ENCODE measurements at regions of chr4 and their contacts with region 1.

Region 1: GRCh38 chr4:118974758-118975157 is 86.1 kb downstream of the SYNPO2 start:
- DNase-seq: no peak
- ATAC-seq: no peak
- H3K4me3 ChIP-seq: peak overlapping the region in 3 of 4 donors; percentile 23 to 43 (median 39)
- H3K27ac ChIP-seq: peak overlapping the region; percentile 87 to 99 (median 92)
- H3K4me1 ChIP-seq: peaks cover 40 to 46% of the 10 kb centered on the region in 2 donors
- H3K27me3 ChIP-seq: no peaks in the 10 kb centered on the region
- CTCF ChIP-seq: no peak
- POLR2A ChIP-seq: no peak

Region 2: DNA sequence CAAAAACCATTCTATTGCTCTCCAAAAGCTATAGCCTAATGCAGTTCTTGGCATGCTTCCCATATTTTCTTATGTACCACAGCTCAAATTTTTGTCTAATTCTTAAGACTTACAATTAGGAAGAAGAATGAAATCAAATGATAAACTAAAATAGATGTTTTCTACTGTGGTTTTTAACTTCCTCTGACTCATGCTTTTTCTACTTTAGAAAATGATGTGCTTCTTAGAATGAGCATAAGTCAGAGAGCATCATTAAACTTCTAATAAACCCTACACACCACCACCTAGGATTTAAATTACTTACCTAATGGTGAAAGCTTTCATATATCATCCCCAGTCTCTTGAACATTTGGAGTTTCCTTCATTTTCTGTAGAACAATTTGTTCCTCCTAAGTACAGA is 1157.5 kb before region 1 on chr4:
- in situ Hi-C with region 1: no loop called
- intact Hi-C with region 1: no loop called
- DNase-seq: no peak
- ATAC-seq: no peak
- H3K4me3 ChIP-seq: no peak overlapping the region
- H3K27ac ChIP-seq: no peak overlapping the region
- H3K4me1 ChIP-seq: no peaks in the 10 kb centered on the region
- H3K27me3 ChIP-seq: no peaks in the 10 kb centered on the region
- CTCF ChIP-seq: no peak
- POLR2A ChIP-seq: no peak

Region 3: DNA sequence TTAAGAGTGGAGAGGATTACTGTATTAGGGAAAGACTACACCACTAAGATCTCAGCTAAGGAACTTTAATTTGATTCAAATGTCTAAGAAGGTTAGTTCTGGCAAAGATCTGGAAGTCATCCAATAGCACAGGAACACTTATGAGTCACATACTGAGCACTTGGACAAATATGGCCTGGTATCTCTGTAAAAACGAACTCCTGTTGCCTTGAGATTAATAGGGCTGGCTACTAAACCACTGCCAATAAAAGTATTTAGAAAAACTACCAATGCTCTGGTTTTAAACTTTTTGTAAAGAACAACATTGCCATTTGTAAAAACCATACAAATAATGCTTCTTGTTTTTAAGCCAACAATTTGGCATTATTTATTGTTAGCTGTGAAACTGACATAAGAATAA is 209.4 kb before region 1 on chr4:
- in situ Hi-C with region 1: loop called in 3 of 4 experiments (anchors 5 to 10 kb)
- intact Hi-C with region 1: no loop called
- DNase-seq: peak in 1 of 2 donors; percentile 27
- ATAC-seq: peak; percentile 95 to 97
- H3K4me3 ChIP-seq: no peak overlapping the region
- H3K27ac ChIP-seq: peak overlapping the region; percentile 27 to 74 (median 57)
- H3K4me1 ChIP-seq: peaks cover 31 to 48% of the 10 kb centered on the region in 2 donors
- H3K27me3 ChIP-seq: no peaks in the 10 kb centered on the region
- CTCF ChIP-seq: no peak
- POLR2A ChIP-seq: no peak

Region 4: GRCh38 chr4:119517361-119518226 is 542.8 kb after region 1 on chr4:
- in situ Hi-C with region 1: no loop called
- intact Hi-C with region 1: no loop called
- DNase-seq: no peak
- ATAC-seq: peak in 1 of 2 donors; percentile 57
- H3K4me3 ChIP-seq: no peak overlapping the region
- H3K27ac ChIP-seq: peak overlapping the region; percentile 13 to 46 (median 33)
- H3K4me1 ChIP-seq: peaks cover 6 to 7% of the 10 kb centered on the region in 2 donors
- H3K27me3 ChIP-seq: no peaks in the 10 kb centered on the region
- CTCF ChIP-seq: no peak
- POLR2A ChIP-seq: no peak

Measured in gastrocnemius medialis (tissue), 4 donors.